SK-N-SH (cell line): ENCODE measurements at regions of chr9 and their contacts with region 1.

Region 1: DNA sequence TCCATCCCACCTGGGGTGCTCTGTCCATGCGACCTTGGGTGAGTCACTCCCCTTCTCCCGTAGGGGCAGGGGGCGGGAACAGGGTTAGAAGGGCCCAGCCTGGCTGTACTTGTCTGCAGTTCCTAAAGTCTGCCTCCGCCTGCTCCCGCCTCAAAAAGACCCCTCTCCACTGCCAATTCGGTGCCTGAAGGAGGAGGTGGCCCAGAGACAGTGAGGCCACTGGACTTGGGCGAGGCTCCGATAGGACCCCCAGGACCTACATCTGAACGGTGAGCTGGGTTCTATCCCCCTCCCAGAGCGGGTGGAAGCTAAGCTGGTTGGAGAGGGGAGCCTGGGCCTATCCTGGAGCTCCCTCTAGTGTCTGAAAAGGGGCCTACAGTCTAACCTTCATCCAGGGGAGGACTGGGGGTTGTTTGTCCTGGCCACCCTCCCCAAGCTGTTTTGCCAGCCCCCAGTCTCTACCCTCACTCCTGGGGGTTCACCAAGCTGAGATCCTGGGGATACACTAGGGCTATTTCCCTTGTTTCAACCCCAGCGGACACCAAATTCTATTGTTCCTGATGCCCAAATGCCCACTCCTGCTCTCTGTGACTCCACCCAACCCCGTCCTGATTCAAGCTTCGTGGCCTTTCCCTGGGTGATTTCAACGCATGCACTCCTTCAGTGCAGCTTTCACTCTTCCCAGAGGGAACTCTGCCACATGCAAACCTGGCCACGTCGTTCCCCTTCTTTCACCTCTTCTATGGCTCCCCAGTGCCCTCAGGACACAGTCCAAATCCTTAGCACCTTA is 6.1 kb upstream of the CRB2 start:
- DNase-seq: peak; percentile 90
- H3K4me3 ChIP-seq: peak overlapping the region in 1 of 2 experiments; percentile 47; a peak in 1 of 4 replicates
- H3K27ac ChIP-seq: no peak overlapping the region
- H3K4me1 ChIP-seq: peaks cover 6 to 7% of the 10 kb centered on the region in 2 experiments; a peak in 2 of 4 replicates
- H3K27me3 ChIP-seq: peaks cover 6% of the 10 kb centered on the region
- CTCF ChIP-seq: peak; percentile 95
- EP300 ChIP-seq: no peak
- RAD21 ChIP-seq: peak; percentile 97

Region 2: DNA sequence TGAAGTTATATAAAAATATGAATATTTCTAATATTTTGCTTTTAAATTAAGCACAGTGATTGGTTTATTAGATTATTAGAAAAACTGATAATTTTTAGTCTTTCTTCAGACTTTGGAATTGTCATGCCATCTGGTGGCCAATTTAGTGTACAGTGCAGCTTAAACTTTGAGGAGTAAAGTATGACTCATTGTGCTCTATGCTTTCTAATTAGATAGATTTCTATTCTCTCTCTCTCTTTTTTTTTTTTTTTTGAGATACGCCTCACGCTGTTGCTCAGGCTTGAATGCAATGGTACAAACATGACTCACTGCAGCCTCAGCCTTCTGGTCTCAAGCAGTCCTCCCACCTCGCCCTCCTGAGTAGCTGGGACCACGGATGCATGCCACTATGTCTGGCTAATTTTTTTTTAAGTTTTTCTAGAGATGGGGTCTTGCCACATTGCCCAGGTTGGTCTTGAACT is 358.5 kb before region 1 on chr9:
- CTCF ChIA-PET with region 1: interaction called, 11 read pairs
- POLR2A ChIA-PET with region 1: no interaction called
- DNase-seq: peak; percentile 37
- H3K4me3 ChIP-seq: no peak overlapping the region; a peak in 1 of 4 replicates
- H3K27ac ChIP-seq: peak overlapping the region in 1 of 2 experiments; percentile 77; a peak in 2 of 4 replicates
- H3K4me1 ChIP-seq: no peaks in the 10 kb centered on the region
- H3K27me3 ChIP-seq: no peaks in the 10 kb centered on the region
- CTCF ChIP-seq: peak; percentile 83
- EP300 ChIP-seq: no peak
- RAD21 ChIP-seq: peak; percentile 68

Region 3: DNA sequence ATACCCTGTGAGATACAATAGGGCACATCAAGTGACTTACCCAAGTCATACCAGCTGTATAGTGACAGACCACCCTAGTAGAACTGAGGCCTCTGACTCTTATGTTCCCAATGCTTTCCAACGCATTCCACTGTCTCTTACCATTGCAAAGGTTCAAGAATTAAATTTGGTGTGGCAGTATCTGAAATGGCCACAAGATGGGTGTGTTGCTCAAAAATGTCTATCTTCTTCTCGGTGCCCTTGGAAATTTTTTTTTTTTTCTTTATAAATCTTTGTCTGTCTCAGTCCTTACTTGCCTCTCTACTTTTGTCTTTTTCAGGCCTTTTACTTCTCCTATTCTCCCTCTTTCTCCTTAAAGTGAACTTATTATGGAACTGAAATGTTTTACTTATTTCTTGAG is 268.1 kb before region 1 on chr9:
- CTCF ChIA-PET with region 1: interaction called, 58 read pairs
- POLR2A ChIA-PET with region 1: no interaction called
- DNase-seq: peak; percentile 25
- H3K4me3 ChIP-seq: no peak overlapping the region; a peak in 1 of 4 replicates
- H3K27ac ChIP-seq: no peak overlapping the region
- H3K4me1 ChIP-seq: peaks cover 0 to 7% of the 10 kb centered on the region in 2 experiments; a peak in 1 of 4 replicates
- H3K27me3 ChIP-seq: no peaks in the 10 kb centered on the region
- CTCF ChIP-seq: peak; percentile 76
- EP300 ChIP-seq: no peak
- RAD21 ChIP-seq: peak; percentile 76

Region 4: DNA sequence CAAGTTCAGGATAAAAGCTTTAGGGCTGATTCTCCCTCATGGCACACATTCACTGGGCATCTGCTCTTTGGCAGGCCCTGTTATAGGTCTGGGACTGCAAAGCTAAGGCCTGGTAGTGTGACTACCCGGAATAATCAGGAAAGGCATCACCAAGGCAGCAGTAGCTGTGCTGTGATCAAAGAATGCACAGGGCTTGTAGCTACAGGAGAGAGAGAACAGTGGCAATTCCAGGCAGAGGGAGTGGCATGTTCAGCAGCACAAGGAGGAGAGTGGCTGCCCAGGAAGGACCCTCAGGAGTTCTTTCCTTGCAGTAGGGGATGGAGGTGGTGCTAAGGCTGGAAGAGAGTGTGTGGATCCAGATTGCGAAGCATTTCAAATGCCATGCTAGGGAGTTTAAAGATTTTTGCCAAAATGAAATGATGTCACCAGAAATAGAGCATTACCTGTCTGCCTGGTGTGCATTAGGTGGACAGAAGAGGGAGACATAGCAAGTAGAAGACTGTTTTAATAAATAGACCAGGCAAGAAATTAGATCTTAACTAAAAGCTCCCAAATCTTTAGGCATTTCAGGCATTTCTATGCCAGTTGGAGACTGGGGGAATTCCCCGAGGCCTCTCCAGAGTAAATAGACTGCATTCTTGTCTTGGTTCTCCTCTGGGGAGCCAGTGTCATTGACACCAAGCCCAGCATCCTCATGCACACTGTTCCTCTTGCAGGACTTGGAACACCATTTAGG is 247.3 kb before region 1 on chr9:
- CTCF ChIA-PET with region 1: interaction called, 21 read pairs
- POLR2A ChIA-PET with region 1: no interaction called
- DNase-seq: no peak
- H3K4me3 ChIP-seq: no peak overlapping the region
- H3K27ac ChIP-seq: no peak overlapping the region; a peak in 1 of 4 replicates
- H3K4me1 ChIP-seq: no peaks in the 10 kb centered on the region; a peak in 1 of 4 replicates
- H3K27me3 ChIP-seq: no peaks in the 10 kb centered on the region
- CTCF ChIP-seq: peak; percentile 45
- EP300 ChIP-seq: no peak
- RAD21 ChIP-seq: peak; percentile 23; the same call in 1 of the 2 replicates

Region 5: GRCh38 chr9:123326662-123327093 is 23.2 kb before region 1 on chr9:
- CTCF ChIA-PET with region 1: interaction called, 17 read pairs
- POLR2A ChIA-PET with region 1: no interaction called
- DNase-seq: no peak
- H3K4me3 ChIP-seq: no peak overlapping the region
- H3K27ac ChIP-seq: no peak overlapping the region
- H3K4me1 ChIP-seq: no peaks in the 10 kb centered on the region; a peak in 1 of 4 replicates
- H3K27me3 ChIP-seq: no peaks in the 10 kb centered on the region
- CTCF ChIP-seq: no peak
- EP300 ChIP-seq: no peak
- RAD21 ChIP-seq: no peak

Region 6: GRCh38 chr9:123360161-123361085 is 10.5 kb after region 1 on chr9:
- CTCF ChIA-PET with region 1: interaction called, 77 read pairs
- POLR2A ChIA-PET with region 1: no interaction called
- DNase-seq: peak; percentile 85
- H3K4me3 ChIP-seq: no peak overlapping the region
- H3K27ac ChIP-seq: no peak overlapping the region
- H3K4me1 ChIP-seq: peaks cover 0 to 4% of the 10 kb centered on the region in 2 experiments; a peak in 1 of 4 replicates
- H3K27me3 ChIP-seq: no peaks in the 10 kb centered on the region
- CTCF ChIP-seq: no peak
- EP300 ChIP-seq: no peak
- RAD21 ChIP-seq: no peak

Region 7: DNA sequence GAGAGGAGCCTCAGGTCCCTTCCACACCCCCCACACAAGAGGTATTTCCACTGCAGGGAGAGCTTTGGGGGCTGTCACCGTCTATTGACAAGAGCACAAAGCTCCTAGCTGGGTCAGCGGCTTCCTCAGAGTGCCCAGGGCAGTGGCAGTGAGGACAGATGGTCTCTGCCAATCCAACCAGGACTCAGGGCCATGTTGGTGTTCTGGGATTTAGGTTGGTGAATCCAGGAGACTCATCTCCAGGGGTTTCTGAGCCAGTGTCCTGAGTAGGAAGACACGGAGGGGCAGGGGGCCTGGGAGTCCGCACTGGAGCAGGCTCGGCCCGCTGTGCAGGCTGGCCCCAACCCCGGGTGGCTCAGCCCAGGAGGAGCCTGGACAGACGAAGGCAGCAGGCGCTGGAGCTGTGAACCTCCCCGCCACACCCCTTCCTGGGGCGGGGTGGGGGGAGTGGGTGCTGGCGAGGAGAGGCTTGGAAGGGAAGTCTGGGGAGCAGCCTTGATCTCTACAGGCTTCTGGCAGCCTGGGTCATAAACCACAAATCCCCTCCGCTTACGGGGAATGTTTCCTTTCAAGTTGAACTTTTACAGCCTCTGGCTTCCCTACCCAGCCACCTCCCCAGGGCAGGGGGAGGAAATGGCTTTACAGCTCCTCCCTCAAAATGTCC is 25.7 kb after region 1 on chr9:
- CTCF ChIA-PET with region 1: interaction called, 331 read pairs
- POLR2A ChIA-PET with region 1: no interaction called
- DNase-seq: no peak
- H3K4me3 ChIP-seq: no peak overlapping the region
- H3K27ac ChIP-seq: no peak overlapping the region
- H3K4me1 ChIP-seq: peaks cover 0 to 30% of the 10 kb centered on the region in 2 experiments; a peak in 1 of 4 replicates
- H3K27me3 ChIP-seq: peaks cover 40% of the 10 kb centered on the region
- CTCF ChIP-seq: no peak
- EP300 ChIP-seq: no peak
- RAD21 ChIP-seq: no peak

Region 8: DNA sequence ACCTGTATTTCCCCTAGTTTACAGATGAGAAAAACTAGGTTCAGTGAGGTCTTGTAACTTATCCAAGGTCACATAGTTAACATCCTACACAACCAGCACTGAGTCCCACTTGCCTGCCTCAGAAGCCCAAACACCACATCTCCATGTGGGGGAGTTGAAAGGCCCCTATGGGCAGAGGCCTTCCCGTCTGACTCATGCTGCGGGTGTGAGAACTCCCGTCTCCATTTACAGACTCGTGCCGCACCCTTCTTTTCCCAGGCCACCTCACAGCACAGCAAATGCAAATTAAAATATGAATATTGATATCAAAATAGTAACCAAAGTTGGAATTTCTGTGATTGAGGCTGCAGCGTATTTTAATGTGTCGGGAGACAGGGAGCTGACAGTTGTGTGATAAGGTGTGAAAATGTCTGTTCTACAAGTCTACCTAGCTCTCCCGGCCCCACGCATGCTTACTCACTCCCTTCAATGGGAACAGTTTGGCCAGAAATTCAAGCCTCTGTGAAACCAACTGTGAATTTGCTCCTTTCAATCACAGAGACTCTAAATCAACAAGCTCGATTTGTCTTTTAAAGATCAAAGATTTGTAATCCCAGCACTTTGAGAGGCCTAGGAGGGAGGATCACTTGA is 96.2 kb after region 1 on chr9:
- CTCF ChIA-PET with region 1: no interaction called
- POLR2A ChIA-PET with region 1: no interaction called
- DNase-seq: no peak
- H3K4me3 ChIP-seq: no peak overlapping the region
- H3K27ac ChIP-seq: no peak overlapping the region
- H3K4me1 ChIP-seq: peaks cover 0 to 8% of the 10 kb centered on the region in 2 experiments; a peak in 1 of 4 replicates
- H3K27me3 ChIP-seq: no peaks in the 10 kb centered on the region
- CTCF ChIP-seq: no peak
- EP300 ChIP-seq: no peak
- RAD21 ChIP-seq: no peak